ENCODE measurements at regions of chr7 and their contacts with region 1.

Region 1: DNA sequence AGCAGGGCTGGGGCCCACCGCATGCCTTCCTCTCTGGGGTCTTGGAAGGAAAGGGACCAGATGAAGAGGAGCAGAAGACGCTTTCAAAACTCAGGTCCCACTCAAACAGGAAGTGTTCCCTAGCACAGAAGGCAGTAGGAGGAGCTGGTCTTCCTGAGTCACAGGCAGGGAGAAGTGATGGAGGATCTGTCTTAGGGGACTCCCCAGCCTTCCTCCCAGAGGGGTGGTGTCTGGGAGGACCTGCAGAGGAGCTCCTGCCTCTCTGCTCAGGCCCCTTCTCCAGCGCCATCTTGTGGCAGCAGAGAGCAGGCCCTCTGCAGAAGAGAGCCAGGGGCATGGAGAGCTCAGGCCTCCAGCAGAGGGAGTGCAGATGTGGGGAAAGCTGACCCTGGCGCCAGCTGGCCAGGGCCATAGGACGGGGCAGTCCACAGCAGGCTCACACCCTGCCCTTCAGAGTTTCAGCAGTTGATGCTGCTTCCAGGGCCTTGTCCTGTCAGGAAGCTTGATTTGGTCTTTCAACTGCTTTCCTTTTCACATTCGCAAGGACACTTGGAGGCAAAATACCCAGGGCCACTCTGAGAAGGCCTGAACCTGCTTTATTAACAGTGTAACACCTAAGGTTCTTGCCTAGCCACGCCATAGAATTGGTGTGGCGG is 62.2 kb upstream of the TARP start:
- DNase-seq: peak; percentile 58 to 78 (median 73)
- ATAC-seq: peak; percentile 97
- H3K4me3 ChIP-seq: peak overlapping the region; percentile 42
- H3K4me3 Mint-ChIP-seq: peak overlapping the region; percentile 54 to 76 (median 64)
- H3K27ac ChIP-seq: peak overlapping the region; percentile 52
- H3K27ac Mint-ChIP-seq: peak overlapping the region; percentile 48 to 92 (median 77)
- H3K4me1 ChIP-seq: peaks cover 16 to 21% of the 10 kb centered on the region in 2 donors
- H3K4me1 Mint-ChIP-seq: peaks cover 8 to 46% (median 36%) of the 10 kb centered on the region in 7 donors
- H3K27me3 ChIP-seq: no peaks in the 10 kb centered on the region
- H3K27me3 Mint-ChIP-seq: no peaks in the 10 kb centered on the region

Region 2: DNA sequence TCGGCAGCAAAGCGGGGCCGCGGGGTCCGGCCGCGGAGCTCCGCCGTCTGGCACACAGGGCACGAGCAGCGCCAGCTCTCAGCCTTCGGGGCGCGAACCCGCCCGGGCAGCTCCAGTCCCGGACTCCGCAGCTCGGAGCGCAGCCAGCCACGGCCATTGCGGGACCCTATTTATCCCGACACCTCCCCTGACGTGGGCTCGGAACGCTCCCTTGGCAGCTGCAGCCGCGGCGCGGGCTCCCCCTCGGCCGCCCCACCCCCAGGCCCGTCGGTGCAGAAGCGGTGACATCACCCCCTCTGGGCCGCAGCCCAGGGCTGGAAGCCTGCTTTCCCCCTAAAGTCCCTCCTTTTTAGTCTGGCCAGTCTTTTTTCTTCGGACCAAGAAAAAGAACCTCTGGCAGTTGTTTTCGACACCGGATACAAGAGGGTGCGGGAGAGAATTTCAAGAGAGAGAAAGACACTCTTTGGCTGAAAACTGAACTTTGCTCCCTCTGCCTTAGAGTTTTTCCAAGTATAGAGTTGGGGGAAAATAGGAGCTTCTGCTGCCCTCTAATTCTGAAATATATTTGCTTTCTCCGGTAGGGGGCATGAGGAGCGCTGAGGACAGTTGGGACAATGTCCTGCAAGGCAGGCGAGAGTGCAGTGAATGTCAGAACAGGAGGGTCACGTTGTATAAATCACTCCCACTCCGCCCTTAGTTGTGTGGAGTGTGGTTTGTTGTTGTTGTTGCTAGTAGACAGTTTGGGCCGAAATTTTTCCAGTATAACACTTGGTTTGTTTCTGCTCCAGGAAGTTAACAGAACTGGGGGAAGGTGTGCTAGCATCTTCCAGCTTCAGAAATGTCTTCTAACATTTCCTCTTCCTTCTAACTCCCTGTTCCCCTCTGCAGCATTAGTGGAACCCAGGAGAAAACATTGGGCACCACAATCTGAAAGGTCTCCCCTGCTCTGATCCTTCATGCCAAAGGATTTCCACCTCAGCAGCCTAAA is 418.7 kb before region 1 on chr7 and contains the start of gene SFRP4:
- CTCF ChIA-PET with region 1: no interaction called
- POLR2A ChIA-PET with region 1: no interaction called
- intact Hi-C with region 1: no loop called
- DNase-seq: no peak
- ATAC-seq: peak; percentile 35
- H3K4me3 ChIP-seq: no peak within 1 kb of the TSS
- H3K4me3 Mint-ChIP-seq: peak within 1 kb of the TSS in 9 of 10 donors; percentile 9 to 73 (median 49)
- H3K27ac ChIP-seq: no peak within 1 kb of the TSS
- H3K27ac Mint-ChIP-seq: peak within 1 kb of the TSS in 1 of 9 donors; percentile 63
- H3K4me1 ChIP-seq: no peaks in the 10 kb centered on the region
- H3K4me1 Mint-ChIP-seq: peaks cover 5 to 32% (median 18%) of the 10 kb centered on the region in 7 donors
- H3K27me3 ChIP-seq: peaks cover 0 to 7% of the 10 kb centered on the region in 2 donors
- H3K27me3 Mint-ChIP-seq: peaks cover 63 to 81% (median 70%) of the 10 kb centered on the region in 5 donors
- total RNA-seq, gene SFRP4: not detected

Region 3: DNA sequence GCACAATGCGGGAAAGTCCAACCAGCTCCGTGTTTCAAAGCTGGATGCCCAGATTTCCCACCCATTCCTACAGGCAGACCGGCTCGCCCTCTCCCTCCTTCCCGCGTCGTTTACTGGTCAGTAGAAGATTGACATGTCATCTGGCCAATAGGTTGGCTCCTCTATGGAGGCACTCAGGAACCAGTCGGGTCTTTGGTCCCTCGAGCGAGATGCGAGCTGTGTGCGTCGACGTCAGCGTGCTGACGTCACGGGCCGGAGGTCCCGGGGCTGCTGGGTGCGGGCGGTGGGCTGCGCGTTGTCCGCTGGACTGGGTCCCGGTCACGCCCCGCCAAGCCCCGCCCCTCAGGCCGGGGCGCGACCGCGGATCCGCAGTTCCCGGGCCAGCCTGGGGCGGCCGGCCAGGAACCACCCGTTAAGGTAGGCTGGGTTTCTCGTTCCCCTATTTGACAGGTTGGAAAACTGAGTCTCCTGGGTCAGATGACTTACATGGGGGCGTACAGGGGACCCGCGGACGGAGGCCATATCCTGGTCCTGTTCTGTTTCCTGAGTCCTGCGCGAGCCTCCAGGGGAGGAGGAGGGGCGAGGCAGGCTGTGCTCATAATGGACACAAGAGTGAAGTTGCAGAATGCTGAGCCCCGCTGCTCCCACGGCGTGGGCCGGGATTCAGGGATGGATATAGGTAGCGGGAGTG is 157.5 kb before region 1 on chr7 and contains the start of gene STARD3NL:
- CTCF ChIA-PET with region 1: no interaction called
- POLR2A ChIA-PET with region 1: no interaction called
- intact Hi-C with region 1: loop called in 1 of 2 experiments (anchors 5 kb)
- DNase-seq: peak; percentile 68 to 97 (median 88)
- ATAC-seq: peak; percentile 97
- H3K4me3 ChIP-seq: peak within 1 kb of the TSS; percentile 96
- H3K4me3 Mint-ChIP-seq: peak within 1 kb of the TSS; percentile 94 to 100 (median 99)
- H3K27ac ChIP-seq: peak within 1 kb of the TSS; percentile 84
- H3K27ac Mint-ChIP-seq: peak within 1 kb of the TSS; percentile 66 to 98 (median 97)
- H3K4me1 ChIP-seq: peaks cover 17 to 23% of the 10 kb centered on the region in 2 donors
- H3K4me1 Mint-ChIP-seq: peaks cover 21 to 50% (median 45%) of the 10 kb centered on the region in 7 donors
- H3K27me3 ChIP-seq: no peaks in the 10 kb centered on the region
- H3K27me3 Mint-ChIP-seq: peaks cover 3 to 14% (median 10%) of the 10 kb centered on the region in 5 donors
- total RNA-seq, gene STARD3NL: 9.4 to 22.0 (median 12.2) TPM

Region 4: DNA sequence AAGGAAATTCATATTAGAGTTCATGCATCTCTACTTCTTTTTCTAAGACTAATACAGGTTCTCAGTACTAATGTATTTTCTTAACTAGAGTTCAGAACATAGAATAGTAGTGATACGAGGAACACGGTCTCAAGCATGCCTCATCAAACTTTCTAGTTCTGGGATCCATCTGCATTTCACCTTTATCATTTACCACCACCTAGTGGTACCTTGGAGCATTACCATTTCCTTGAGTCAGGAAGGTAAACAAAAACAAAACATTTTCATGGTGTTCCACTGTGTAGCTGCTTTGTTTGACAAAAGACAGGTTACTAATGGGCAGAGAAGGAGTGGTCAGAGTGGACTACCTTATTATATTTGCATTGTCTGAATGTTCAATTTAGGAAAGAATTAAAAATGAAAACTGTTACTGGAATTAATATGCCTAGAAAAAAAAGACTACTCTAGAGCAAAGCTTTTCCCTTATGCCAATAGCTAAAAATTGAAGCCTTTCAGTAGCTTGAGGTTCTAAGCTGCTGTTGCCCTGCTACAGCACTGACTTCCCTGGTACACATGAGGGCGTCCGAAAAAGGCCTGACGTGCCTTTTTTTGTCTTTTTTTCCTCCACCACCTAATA is 113.0 kb before region 1 on chr7:
- CTCF ChIA-PET with region 1: interaction called, 78 read pairs
- POLR2A ChIA-PET with region 1: interaction called, 3 read pairs
- intact Hi-C with region 1: loop called in 1 of 2 experiments (anchors 2 kb)
- DNase-seq: peak in 7 of 9 donors; percentile 34 to 68 (median 61)
- ATAC-seq: peak; percentile 80
- H3K4me3 ChIP-seq: no peak overlapping the region
- H3K4me3 Mint-ChIP-seq: peak overlapping the region in 1 of 10 donors; percentile 30
- H3K27ac ChIP-seq: no peak overlapping the region
- H3K27ac Mint-ChIP-seq: peak overlapping the region in 5 of 9 donors; percentile 0 to 39 (median 13)
- H3K4me1 ChIP-seq: peaks cover 0 to 70% of the 10 kb centered on the region in 2 donors
- H3K4me1 Mint-ChIP-seq: peaks cover 4 to 38% (median 7%) of the 10 kb centered on the region in 7 donors
- H3K27me3 ChIP-seq: no peaks in the 10 kb centered on the region
- H3K27me3 Mint-ChIP-seq: no peaks in the 10 kb centered on the region

Region 5: DNA sequence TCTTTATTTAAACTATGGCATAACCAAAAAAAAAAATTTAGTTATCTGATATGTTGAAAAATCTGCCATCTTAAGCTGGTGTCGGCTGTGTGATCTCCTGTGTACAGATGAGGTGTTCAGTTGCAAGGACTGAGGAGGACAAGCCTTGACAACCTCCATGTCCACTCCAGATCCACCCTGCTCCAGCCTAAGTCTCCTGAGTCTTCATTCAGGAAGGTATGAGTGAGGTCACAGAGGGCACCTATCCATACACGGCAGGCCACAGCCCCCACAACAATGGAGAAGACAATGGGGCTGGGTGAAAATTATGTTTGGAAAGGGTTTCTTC is 78.3 kb before region 1 on chr7:
- CTCF ChIA-PET with region 1: no interaction called
- POLR2A ChIA-PET with region 1: no interaction called
- intact Hi-C with region 1: loop called in 1 of 2 experiments (anchors 2 kb)
- DNase-seq: no peak
- ATAC-seq: peak; percentile 46
- H3K4me3 ChIP-seq: no peak overlapping the region
- H3K4me3 Mint-ChIP-seq: no peak overlapping the region
- H3K27ac ChIP-seq: no peak overlapping the region
- H3K27ac Mint-ChIP-seq: peak overlapping the region in 1 of 9 donors; percentile 17
- H3K4me1 ChIP-seq: no peaks in the 10 kb centered on the region
- H3K4me1 Mint-ChIP-seq: peaks cover 0 to 14% (median 4%) of the 10 kb centered on the region in 7 donors
- H3K27me3 ChIP-seq: no peaks in the 10 kb centered on the region
- H3K27me3 Mint-ChIP-seq: no peaks in the 10 kb centered on the region

Region 6: DNA sequence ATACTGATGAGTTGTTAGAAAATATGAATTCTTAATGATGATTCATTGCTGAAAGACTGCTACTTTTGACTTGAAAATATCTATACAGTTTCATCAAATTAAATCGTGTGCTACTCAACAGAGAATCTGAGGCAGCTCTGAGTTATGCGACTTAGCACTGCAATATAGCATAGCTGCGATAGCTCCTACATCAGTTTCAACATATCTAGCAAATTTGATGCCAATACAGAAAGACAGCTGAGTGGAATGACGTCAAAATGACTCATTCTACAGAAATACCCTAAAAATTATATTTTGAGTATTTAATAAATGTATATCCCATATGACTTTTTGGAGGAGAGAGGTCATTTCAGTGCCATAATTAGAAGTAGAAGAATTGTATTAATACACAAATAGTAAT is 61.1 kb before region 1 on chr7:
- CTCF ChIA-PET with region 1: no interaction called
- POLR2A ChIA-PET with region 1: no interaction called
- intact Hi-C with region 1: no loop called
- DNase-seq: no peak
- ATAC-seq: peak; percentile 38
- H3K4me3 ChIP-seq: no peak overlapping the region
- H3K4me3 Mint-ChIP-seq: peak overlapping the region in 1 of 10 donors; percentile 55
- H3K27ac ChIP-seq: no peak overlapping the region
- H3K27ac Mint-ChIP-seq: no peak overlapping the region
- H3K4me1 ChIP-seq: no peaks in the 10 kb centered on the region
- H3K4me1 Mint-ChIP-seq: no peaks in the 10 kb centered on the region
- H3K27me3 ChIP-seq: no peaks in the 10 kb centered on the region
- H3K27me3 Mint-ChIP-seq: no peaks in the 10 kb centered on the region

Region 7: GRCh38 chr7:38369816-38370493 is 34.3 kb after region 1 on chr7:
- CTCF ChIA-PET with region 1: interaction called, 46 read pairs
- POLR2A ChIA-PET with region 1: interaction called, 3 read pairs
- intact Hi-C with region 1: loop called in 1 of 2 experiments (anchors 1 kb)
- DNase-seq: peak; percentile 39 to 79 (median 63)
- ATAC-seq: peak; percentile 89
- H3K4me3 ChIP-seq: no peak overlapping the region
- H3K4me3 Mint-ChIP-seq: peak overlapping the region; percentile 9 to 64 (median 56)
- H3K27ac ChIP-seq: peak overlapping the region; percentile 64
- H3K27ac Mint-ChIP-seq: peak overlapping the region in 8 of 9 donors; percentile 85 to 97 (median 92)
- H3K4me1 ChIP-seq: peaks cover 47% of the 10 kb centered on the region in 2 donors
- H3K4me1 Mint-ChIP-seq: peaks cover 33 to 79% (median 69%) of the 10 kb centered on the region in 7 donors
- H3K27me3 ChIP-seq: no peaks in the 10 kb centered on the region
- H3K27me3 Mint-ChIP-seq: no peaks in the 10 kb centered on the region

Region 8: GRCh38 chr7:38775506-38776175 is 440.0 kb after region 1 on chr7:
- CTCF ChIA-PET with region 1: no interaction called
- POLR2A ChIA-PET with region 1: no interaction called
- intact Hi-C with region 1: no loop called
- DNase-seq: no peak
- ATAC-seq: no peak
- H3K4me3 ChIP-seq: no peak overlapping the region
- H3K4me3 Mint-ChIP-seq: no peak overlapping the region
- H3K27ac ChIP-seq: no peak overlapping the region
- H3K27ac Mint-ChIP-seq: no peak overlapping the region
- H3K4me1 ChIP-seq: no peaks in the 10 kb centered on the region
- H3K4me1 Mint-ChIP-seq: no peaks in the 10 kb centered on the region
- H3K27me3 ChIP-seq: no peaks in the 10 kb centered on the region
- H3K27me3 Mint-ChIP-seq: no peaks in the 10 kb centered on the region

Measured in naive thymus-derived CD4-positive, alpha-beta T cell (primary cell).